ENCODE measurements at regions of chr1 and their contacts with region 1.

Region 1: DNA sequence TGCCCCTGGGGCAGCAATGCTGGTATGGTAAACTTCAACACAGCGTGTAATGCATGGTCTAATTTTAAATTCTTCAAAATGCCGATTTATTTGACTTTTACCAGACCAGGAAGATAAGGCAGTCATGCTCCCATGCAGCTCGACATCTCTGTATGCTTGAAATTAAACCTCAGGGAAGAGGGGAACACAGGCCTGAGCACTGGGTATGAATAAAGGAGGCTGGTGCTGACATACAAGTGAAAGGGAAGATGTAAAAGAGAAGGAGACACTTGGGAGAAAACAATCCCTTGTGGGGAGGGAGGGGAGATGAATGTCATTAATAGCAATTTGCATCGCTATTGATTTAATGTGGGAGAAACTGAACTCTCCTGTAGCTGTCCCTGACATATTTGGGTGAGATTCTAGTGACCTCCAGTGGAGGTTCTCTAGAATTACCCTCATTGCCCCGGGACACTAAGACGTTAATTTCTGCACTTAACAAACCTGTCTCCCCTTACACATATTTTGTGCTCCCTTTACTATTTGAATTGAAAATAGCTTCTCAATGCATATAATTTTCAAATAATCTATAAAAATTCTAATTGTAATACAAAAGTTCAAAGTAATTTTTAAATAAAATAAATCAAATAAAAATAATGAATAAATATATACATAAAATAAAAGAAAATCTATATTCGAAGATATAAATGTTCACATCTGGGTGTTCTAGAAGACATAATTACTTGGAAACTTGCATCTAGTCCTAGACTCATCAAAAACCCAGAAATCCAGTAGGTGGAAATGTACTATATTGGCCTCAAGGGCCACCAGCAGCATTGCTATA is 283.1 kb downstream of the LMX1A start:
- DNase-seq: no peak
- H3K4me3 ChIP-seq: no peak overlapping the region
- H3K27ac ChIP-seq: peak overlapping the region in 1 of 4 donors; percentile 33
- H3K4me1 ChIP-seq: peaks cover 0 to 26% (median 17%) of the 10 kb centered on the region in 4 donors
- H3K27me3 ChIP-seq: no peaks in the 10 kb centered on the region
- CTCF ChIP-seq: peak; percentile 72 to 83 (median 75)
- EP300 ChIP-seq: no peak
- POLR2A ChIP-seq: no peak

Region 2: DNA sequence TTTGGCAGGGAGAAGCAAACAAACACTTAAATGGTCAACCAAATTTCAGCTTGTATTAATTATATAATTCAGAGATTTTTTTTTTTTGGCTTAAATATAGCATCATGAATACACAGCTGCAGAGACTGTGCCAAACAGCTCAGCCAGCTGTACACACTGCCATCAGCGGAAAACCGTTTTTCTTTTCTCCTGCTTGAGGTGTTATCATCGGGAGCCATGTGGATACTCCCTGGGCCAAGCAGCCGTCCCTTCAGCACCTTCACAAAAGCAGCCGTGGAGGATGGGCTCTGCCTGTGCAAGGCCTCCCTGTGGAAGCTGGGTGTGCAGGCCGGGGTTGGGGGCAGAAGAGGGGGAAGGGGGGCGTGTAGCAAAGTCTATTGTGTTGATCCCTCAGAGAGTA is 1666.6 kb before region 1 on chr1:
- intact Hi-C with region 1: loop called (anchors 5 kb)
- DNase-seq: no peak
- H3K4me3 ChIP-seq: no peak overlapping the region
- H3K27ac ChIP-seq: peak overlapping the region in 1 of 4 donors; percentile 1
- H3K4me1 ChIP-seq: peaks cover 0 to 20% (median 16%) of the 10 kb centered on the region in 4 donors
- H3K27me3 ChIP-seq: no peaks in the 10 kb centered on the region
- CTCF ChIP-seq: no peak
- EP300 ChIP-seq: no peak
- POLR2A ChIP-seq: no peak

Region 3: DNA sequence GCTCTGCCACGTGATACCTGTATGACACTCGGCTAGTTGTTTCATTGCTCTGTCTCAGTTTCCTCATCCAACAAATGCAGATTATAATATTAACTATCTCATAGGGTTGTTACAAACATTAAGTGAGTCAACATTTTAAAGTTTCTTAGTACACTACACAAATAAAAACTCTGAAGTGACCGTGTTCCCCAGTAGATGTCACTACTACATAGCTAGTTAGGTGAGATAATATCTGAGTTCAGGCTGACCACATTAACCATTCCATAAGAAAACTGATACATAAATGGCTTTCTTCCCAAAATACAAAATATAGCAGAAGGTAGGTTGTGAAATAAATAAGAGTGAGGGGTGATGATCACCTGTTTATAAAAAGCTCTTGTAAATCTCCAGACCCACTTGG is 1537.6 kb before region 1 on chr1:
- intact Hi-C with region 1: loop called (anchors 5 kb)
- DNase-seq: no peak
- H3K4me3 ChIP-seq: no peak overlapping the region
- H3K27ac ChIP-seq: no peak overlapping the region
- H3K4me1 ChIP-seq: peaks cover 0 to 11% (median 9%) of the 10 kb centered on the region in 4 donors
- H3K27me3 ChIP-seq: no peaks in the 10 kb centered on the region
- CTCF ChIP-seq: peak in 2 of 3 experiments; percentile 17 to 28
- EP300 ChIP-seq: no peak
- POLR2A ChIP-seq: no peak

Region 4: GRCh38 chr1:164786980-164787833 is 286.2 kb before region 1 on chr1:
- intact Hi-C with region 1: loop called (anchors 5 kb)
- DNase-seq: peak; percentile 96
- H3K4me3 ChIP-seq: peak overlapping the region in 2 of 4 donors; percentile 8 to 26
- H3K27ac ChIP-seq: peak overlapping the region; percentile 78 to 81 (median 80)
- H3K4me1 ChIP-seq: peaks cover 45 to 97% (median 91%) of the 10 kb centered on the region in 4 donors
- H3K27me3 ChIP-seq: no peaks in the 10 kb centered on the region
- CTCF ChIP-seq: peak; percentile 92 to 93 (median 93)
- EP300 ChIP-seq: no peak
- POLR2A ChIP-seq: no peak

Region 5: GRCh38 chr1:164823486-164824279 is 249.7 kb before region 1 on chr1:
- intact Hi-C with region 1: loop called (anchors 10 kb)
- DNase-seq: no peak
- H3K4me3 ChIP-seq: peak overlapping the region in 2 of 4 donors; percentile 8 to 15
- H3K27ac ChIP-seq: peak overlapping the region; percentile 76 to 82 (median 79)
- H3K4me1 ChIP-seq: peaks cover 24 to 69% (median 60%) of the 10 kb centered on the region in 4 donors
- H3K27me3 ChIP-seq: no peaks in the 10 kb centered on the region
- CTCF ChIP-seq: peak in 2 of 3 experiments; percentile 25 to 32
- EP300 ChIP-seq: no peak
- POLR2A ChIP-seq: no peak

Region 6: GRCh38 chr1:165207853-165208515 is 134.6 kb after region 1 on chr1:
- intact Hi-C with region 1: no loop called
- DNase-seq: no peak
- H3K4me3 ChIP-seq: no peak overlapping the region
- H3K27ac ChIP-seq: no peak overlapping the region
- H3K4me1 ChIP-seq: no peaks in the 10 kb centered on the region
- H3K27me3 ChIP-seq: no peaks in the 10 kb centered on the region
- CTCF ChIP-seq: no peak
- EP300 ChIP-seq: no peak
- POLR2A ChIP-seq: no peak